CD8-positive, alpha-beta T cell (primary cell): ENCODE measurements at regions of chr4 and their contacts with region 1.

Region 1: GRCh38 chr4:12633053-12633651 is 851.0 kb downstream of the RAB28 start:
- DNase-seq: peak; percentile 35 to 73 (median 65)
- ATAC-seq: peak; percentile 71
- H3K4me3 ChIP-seq: no peak overlapping the region
- H3K4me3 Mint-ChIP-seq: no peak overlapping the region
- H3K27ac ChIP-seq: no peak overlapping the region
- H3K27ac Mint-ChIP-seq: no peak overlapping the region
- H3K4me1 ChIP-seq: no peaks in the 10 kb centered on the region
- H3K4me1 Mint-ChIP-seq: no peaks in the 10 kb centered on the region
- H3K27me3 ChIP-seq: no peaks in the 10 kb centered on the region
- H3K27me3 Mint-ChIP-seq: peaks cover 12% of the 10 kb centered on the region
- CTCF ChIP-seq: peak; percentile 75

Region 2: DNA sequence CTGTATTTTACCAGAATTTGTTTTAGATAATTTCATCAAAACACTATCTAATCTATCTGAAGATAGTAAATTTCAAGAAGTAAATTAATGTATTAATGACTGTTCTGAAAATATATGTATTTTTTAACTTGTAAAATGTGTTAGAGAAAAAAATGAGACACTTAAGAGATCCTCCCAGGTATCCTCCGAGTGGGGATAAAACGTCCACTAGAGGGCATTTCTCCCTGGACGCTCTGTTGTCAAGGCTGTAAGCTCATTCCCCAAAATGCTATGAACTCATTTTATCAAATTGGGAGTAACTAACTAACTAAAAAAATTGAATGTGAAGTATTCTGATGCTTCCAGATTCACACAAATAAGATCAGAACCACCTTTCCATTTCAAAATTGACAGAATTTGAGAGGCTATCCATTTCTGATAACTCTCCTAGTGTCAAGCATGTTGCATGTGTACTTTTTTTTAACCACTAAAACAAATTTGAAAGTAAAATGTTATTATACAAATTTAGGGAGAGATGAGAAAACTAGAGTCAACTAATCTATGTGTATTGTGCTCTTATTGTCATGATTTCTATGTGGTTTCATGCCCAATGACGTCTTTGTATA is 867.2 kb before region 1 on chr4:
- CTCF ChIA-PET with region 1: no interaction called
- POLR2A ChIA-PET with region 1: no interaction called
- intact Hi-C with region 1: loop called in 1 of 2 experiments (anchors 10 kb)
- DNase-seq: peak in 3 of 9 experiments; percentile 11 to 28 (median 19)
- ATAC-seq: no peak
- H3K4me3 ChIP-seq: no peak overlapping the region
- H3K4me3 Mint-ChIP-seq: no peak overlapping the region
- H3K27ac ChIP-seq: no peak overlapping the region
- H3K27ac Mint-ChIP-seq: no peak overlapping the region
- H3K4me1 ChIP-seq: no peaks in the 10 kb centered on the region
- H3K4me1 Mint-ChIP-seq: no peaks in the 10 kb centered on the region
- H3K27me3 ChIP-seq: no peaks in the 10 kb centered on the region
- H3K27me3 Mint-ChIP-seq: no peaks in the 10 kb centered on the region
- CTCF ChIP-seq: peak; percentile 44

Region 3: DNA sequence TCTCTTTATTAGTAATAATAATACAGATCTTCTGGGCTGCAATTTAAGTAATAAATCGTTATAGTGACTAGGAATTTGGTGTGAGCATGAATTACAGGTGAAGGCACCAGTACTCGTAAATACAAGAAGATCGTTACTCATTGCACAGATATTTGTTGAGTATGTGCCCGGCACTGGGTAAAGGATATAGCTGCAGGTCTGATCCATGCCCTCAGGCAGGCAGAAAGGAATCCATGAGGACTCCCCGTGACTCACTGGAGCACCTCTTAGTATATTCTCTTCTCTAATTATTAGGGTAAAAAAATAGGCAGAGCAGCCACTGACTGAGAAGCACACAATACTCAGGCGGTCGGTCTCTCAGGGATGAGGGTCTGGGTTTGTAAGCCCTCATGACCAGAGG is 17.3 kb before region 1 on chr4:
- CTCF ChIA-PET with region 1: interaction called, 10 read pairs
- POLR2A ChIA-PET with region 1: no interaction called
- intact Hi-C with region 1: no loop called
- DNase-seq: no peak
- ATAC-seq: no peak
- H3K4me3 ChIP-seq: no peak overlapping the region
- H3K4me3 Mint-ChIP-seq: no peak overlapping the region
- H3K27ac ChIP-seq: no peak overlapping the region
- H3K27ac Mint-ChIP-seq: no peak overlapping the region
- H3K4me1 ChIP-seq: no peaks in the 10 kb centered on the region
- H3K4me1 Mint-ChIP-seq: no peaks in the 10 kb centered on the region
- H3K27me3 ChIP-seq: no peaks in the 10 kb centered on the region
- H3K27me3 Mint-ChIP-seq: no peaks in the 10 kb centered on the region
- CTCF ChIP-seq: no peak

Region 4: DNA sequence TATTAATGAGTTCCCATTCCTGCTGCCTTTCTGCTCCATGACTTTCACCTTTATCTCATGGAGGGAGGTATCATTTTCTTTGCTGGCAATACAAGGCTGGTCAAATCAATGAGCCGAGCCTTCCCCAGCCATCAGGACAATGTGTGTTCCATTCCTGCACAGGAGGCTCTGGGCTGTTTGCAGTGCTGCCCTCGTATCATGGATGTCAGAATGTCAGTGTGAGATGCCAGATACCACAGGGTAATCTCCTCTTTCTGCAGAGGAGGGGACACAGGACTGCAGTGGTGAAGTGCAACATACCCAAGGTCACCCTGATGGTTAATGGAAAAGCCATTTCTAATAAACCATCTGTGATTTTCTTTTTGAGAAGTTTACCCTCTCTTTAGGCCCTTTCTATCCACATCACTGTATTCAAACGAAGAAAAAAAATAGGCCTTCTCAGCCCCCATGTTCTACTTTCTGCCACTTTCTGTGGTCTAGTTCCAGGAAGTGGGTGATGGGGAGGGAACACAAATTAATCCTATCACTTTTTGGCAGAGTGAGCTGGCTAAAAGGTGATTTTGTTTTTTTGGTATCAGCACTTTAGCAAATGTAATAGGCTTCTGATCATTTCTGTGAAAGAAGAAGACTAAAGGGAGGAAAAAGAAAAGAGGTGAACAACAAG is 1484.6 kb after region 1 on chr4:
- CTCF ChIA-PET with region 1: no interaction called
- POLR2A ChIA-PET with region 1: no interaction called
- intact Hi-C with region 1: no loop called
- DNase-seq: no peak
- ATAC-seq: no peak
- H3K4me3 ChIP-seq: no peak overlapping the region
- H3K4me3 Mint-ChIP-seq: no peak overlapping the region
- H3K27ac ChIP-seq: no peak overlapping the region
- H3K27ac Mint-ChIP-seq: no peak overlapping the region
- H3K4me1 ChIP-seq: no peaks in the 10 kb centered on the region
- H3K4me1 Mint-ChIP-seq: peaks cover 5% of the 10 kb centered on the region
- H3K27me3 ChIP-seq: no peaks in the 10 kb centered on the region
- H3K27me3 Mint-ChIP-seq: peaks cover 2% of the 10 kb centered on the region
- CTCF ChIP-seq: no peak